ENCODE measurements at regions of chr19 and their contacts with region 1.

Region 1: DNA sequence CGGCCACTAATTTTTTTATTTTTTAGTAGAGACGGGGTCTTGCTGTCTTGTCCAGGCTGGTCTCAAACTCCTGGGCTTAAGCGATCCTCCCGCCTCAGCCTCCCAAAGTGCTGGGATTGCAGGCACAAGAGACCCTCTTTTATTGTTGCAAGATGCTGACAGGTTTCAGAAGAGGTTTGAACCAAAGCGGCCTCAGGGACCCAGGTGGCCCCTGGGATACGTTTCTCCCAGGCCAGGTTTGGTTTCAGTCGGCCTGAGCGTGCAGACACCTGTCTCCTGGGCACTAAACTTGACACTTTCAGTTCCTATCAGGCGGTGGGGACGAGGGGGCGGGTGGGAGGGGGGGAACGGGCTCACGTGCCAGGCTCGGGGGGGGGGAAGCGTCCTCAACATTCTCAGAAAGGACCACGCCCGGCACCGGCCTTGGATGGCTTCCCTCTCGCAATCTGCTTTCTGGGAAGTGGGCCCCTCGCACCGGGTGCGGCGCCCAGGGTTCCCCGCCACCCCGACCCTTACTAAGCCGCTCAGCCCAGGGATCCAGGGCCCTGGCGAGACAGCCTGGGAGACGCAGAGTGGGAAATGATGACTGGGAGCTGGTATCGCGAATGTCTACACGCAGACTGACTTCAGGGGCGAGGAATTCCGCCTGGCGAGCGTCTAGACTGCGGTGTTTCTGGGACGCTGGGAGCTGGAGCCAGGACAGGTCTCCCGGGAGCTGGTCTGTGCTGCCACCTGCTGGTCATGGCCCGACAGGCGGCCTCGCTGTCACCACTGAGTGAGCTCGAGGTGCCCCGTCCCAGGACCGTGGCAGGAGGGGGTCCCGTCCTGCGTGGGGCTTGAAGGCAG is 91.6 kb downstream of the GNG7 start:
- DNase-seq: peak; percentile 73 to 96 (median 89)
- ATAC-seq: peak; percentile 37
- H3K4me3 ChIP-seq: peak overlapping the region; percentile 37 to 42
- H3K4me3 Mint-ChIP-seq: peak overlapping the region; percentile 81
- H3K27ac ChIP-seq: no peak overlapping the region
- H3K27ac Mint-ChIP-seq: peak overlapping the region; percentile 57
- H3K4me1 ChIP-seq: peaks cover 30% of the 10 kb centered on the region
- H3K4me1 Mint-ChIP-seq: peaks cover 39% of the 10 kb centered on the region
- H3K27me3 ChIP-seq: peaks cover 0 to 2% of the 10 kb centered on the region in 2 experiments
- H3K27me3 Mint-ChIP-seq: no peaks in the 10 kb centered on the region
- CTCF ChIP-seq: peak; percentile 99

Region 2: DNA sequence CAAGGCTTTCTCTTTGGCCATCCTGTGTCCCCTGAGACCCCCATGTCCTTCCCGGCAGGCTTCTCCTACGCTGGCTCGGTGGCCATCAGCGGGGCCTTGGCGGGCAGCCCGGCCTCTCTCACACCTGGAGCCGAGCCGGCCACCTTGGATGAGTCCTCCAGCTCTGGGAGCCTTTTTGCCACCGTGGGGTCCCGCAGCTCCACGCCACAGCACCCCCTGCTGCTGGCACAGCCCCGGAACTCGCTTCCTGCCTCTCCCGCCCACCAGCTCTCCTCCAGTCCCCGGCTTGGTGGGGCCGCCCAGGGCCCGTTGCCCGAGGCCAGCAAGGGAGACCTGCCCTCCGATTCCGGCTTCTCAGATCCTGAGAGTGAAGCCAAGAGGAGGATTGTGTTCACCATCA is 388.9 kb before region 1 on chr19:
- CTCF ChIA-PET with region 1: no interaction called
- POLR2A ChIA-PET with region 1: no interaction called
- intact Hi-C with region 1: no loop called
- DNase-seq: no peak
- ATAC-seq: no peak
- H3K4me3 ChIP-seq: no peak overlapping the region
- H3K4me3 Mint-ChIP-seq: no peak overlapping the region
- H3K27ac ChIP-seq: no peak overlapping the region
- H3K27ac Mint-ChIP-seq: no peak overlapping the region
- H3K4me1 ChIP-seq: no peaks in the 10 kb centered on the region
- H3K4me1 Mint-ChIP-seq: peaks cover 6% of the 10 kb centered on the region
- H3K27me3 ChIP-seq: no peaks in the 10 kb centered on the region
- H3K27me3 Mint-ChIP-seq: no peaks in the 10 kb centered on the region
- CTCF ChIP-seq: no peak

Region 3: DNA sequence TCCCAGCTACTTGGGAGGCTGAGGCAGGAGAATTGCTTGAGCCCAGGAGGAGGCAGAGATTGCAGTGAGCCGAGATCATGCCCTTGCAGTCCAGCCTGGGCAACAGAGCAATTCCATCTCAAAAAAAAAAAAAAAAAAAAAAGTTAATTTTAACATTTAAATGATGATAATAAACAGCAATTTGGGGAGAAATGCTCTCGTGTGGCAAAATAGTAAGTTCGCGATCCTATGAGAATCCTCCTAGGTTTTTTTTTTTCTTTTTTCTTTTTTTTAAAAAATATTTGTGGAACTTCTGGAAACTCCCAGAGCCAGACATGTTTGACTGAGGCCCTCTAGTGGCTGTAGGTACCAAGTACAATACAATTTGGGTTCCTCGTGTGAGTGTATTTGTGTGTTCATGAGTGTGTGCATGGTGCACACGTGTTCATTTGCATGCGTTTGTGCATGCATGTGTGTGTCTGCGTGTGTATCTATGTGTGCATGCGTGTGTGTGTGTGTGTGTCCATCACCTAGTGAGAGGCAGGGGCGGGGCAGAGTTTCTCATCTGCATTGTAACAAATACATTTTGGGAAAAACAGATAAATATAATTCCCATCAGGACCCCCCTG is 219.6 kb before region 1 on chr19:
- CTCF ChIA-PET with region 1: interaction called, 5 read pairs
- POLR2A ChIA-PET with region 1: no interaction called
- intact Hi-C with region 1: loop called in 1 of 2 experiments (anchors 5 kb)
- DNase-seq: peak in 7 of 9 experiments; percentile 10 to 83 (median 42)
- ATAC-seq: peak; percentile 57
- H3K4me3 ChIP-seq: no peak overlapping the region
- H3K4me3 Mint-ChIP-seq: no peak overlapping the region
- H3K27ac ChIP-seq: no peak overlapping the region
- H3K27ac Mint-ChIP-seq: no peak overlapping the region
- H3K4me1 ChIP-seq: no peaks in the 10 kb centered on the region
- H3K4me1 Mint-ChIP-seq: peaks cover 12% of the 10 kb centered on the region
- H3K27me3 ChIP-seq: no peaks in the 10 kb centered on the region
- H3K27me3 Mint-ChIP-seq: peaks cover 2% of the 10 kb centered on the region
- CTCF ChIP-seq: peak; percentile 77

Region 4: GRCh38 chr19:2415281-2415972 is 195.4 kb before region 1 on chr19:
- CTCF ChIA-PET with region 1: no interaction called
- POLR2A ChIA-PET with region 1: no interaction called
- intact Hi-C with region 1: no loop called
- DNase-seq: no peak
- ATAC-seq: no peak
- H3K4me3 ChIP-seq: no peak overlapping the region
- H3K4me3 Mint-ChIP-seq: no peak overlapping the region
- H3K27ac ChIP-seq: no peak overlapping the region
- H3K27ac Mint-ChIP-seq: no peak overlapping the region
- H3K4me1 ChIP-seq: no peaks in the 10 kb centered on the region
- H3K4me1 Mint-ChIP-seq: no peaks in the 10 kb centered on the region
- H3K27me3 ChIP-seq: no peaks in the 10 kb centered on the region
- H3K27me3 Mint-ChIP-seq: no peaks in the 10 kb centered on the region
- CTCF ChIP-seq: no peak

Region 5: DNA sequence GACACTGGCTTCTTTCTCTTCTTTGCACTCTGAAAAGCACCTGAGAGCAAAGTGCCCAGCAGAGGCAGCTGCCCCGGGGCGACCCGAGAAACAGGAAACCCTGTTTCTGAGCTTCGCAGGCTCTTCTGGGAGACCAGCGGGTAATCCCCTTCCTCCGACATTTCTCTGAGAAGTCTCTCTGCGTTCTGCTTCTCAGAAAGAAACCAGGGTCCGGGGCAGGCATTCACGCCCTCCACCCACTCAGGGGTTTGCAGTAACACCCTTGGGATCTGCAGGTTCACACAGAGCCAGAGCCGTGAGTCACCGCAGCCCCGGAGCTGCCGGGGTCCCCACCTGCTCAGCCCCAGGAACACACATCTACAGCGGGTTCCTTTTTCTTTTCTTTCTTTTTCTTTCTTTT is 49.0 kb before region 1 on chr19:
- CTCF ChIA-PET with region 1: interaction called, 9 read pairs
- POLR2A ChIA-PET with region 1: interaction called, 4 read pairs
- intact Hi-C with region 1: loop called (anchors 2 to 5 kb)
- DNase-seq: peak; percentile 30 to 88 (median 72)
- ATAC-seq: peak; percentile 90
- H3K4me3 ChIP-seq: peak overlapping the region; percentile 65 to 89
- H3K4me3 Mint-ChIP-seq: peak overlapping the region; percentile 96
- H3K27ac ChIP-seq: peak overlapping the region; percentile 78 to 80
- H3K27ac Mint-ChIP-seq: peak overlapping the region; percentile 99
- H3K4me1 ChIP-seq: peaks cover 17% of the 10 kb centered on the region
- H3K4me1 Mint-ChIP-seq: peaks cover 14% of the 10 kb centered on the region
- H3K27me3 ChIP-seq: no peaks in the 10 kb centered on the region
- H3K27me3 Mint-ChIP-seq: no peaks in the 10 kb centered on the region
- CTCF ChIP-seq: no peak

Region 6: GRCh38 chr19:2578901-2579677 is 31.8 kb before region 1 on chr19:
- CTCF ChIA-PET with region 1: interaction called, 82 read pairs
- POLR2A ChIA-PET with region 1: interaction called, 3 read pairs
- intact Hi-C with region 1: loop called (anchors 1 kb)
- DNase-seq: peak; percentile 44 to 81 (median 69)
- ATAC-seq: peak; percentile 54
- H3K4me3 ChIP-seq: peak overlapping the region; percentile 4 to 49
- H3K4me3 Mint-ChIP-seq: peak overlapping the region; percentile 45
- H3K27ac ChIP-seq: no peak overlapping the region
- H3K27ac Mint-ChIP-seq: no peak overlapping the region
- H3K4me1 ChIP-seq: peaks cover 11% of the 10 kb centered on the region
- H3K4me1 Mint-ChIP-seq: peaks cover 2% of the 10 kb centered on the region
- H3K27me3 ChIP-seq: peaks cover 0 to 5% of the 10 kb centered on the region in 2 experiments
- H3K27me3 Mint-ChIP-seq: no peaks in the 10 kb centered on the region
- CTCF ChIP-seq: peak; percentile 44

Region 7: DNA sequence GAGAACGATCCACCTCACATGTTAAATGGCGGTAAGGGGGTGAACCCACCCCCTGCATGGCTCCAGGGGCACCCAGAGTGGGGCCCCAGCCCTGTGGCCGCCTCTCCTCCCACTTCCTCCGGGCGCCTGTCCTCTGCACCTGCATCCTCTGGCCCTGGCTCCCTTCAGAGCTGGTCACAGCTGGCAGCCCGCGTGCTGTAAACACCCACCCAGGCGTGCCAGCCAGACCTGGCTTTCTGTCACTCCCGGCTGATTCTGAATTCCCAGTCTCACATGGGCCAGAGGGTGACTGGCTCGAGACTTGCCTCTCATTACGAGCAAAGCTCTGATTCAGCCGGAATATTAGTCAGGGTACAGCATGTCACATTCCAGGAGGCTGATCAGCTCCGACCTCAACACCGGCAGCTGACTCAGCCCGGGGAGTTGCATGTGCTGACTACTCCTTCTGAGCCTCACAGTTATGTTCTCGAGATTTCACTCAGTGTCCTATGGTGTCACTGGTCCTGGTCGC is 16.5 kb after region 1 on chr19:
- CTCF ChIA-PET with region 1: interaction called, 36 read pairs
- POLR2A ChIA-PET with region 1: interaction called, 29 read pairs
- intact Hi-C with region 1: no loop called
- DNase-seq: peak in 2 of 9 experiments; percentile 28 to 45
- ATAC-seq: peak; percentile 35
- H3K4me3 ChIP-seq: no peak overlapping the region
- H3K4me3 Mint-ChIP-seq: no peak overlapping the region
- H3K27ac ChIP-seq: no peak overlapping the region
- H3K27ac Mint-ChIP-seq: peak overlapping the region; percentile 55
- H3K4me1 ChIP-seq: peaks cover 28% of the 10 kb centered on the region
- H3K4me1 Mint-ChIP-seq: peaks cover 46% of the 10 kb centered on the region
- H3K27me3 ChIP-seq: no peaks in the 10 kb centered on the region
- H3K27me3 Mint-ChIP-seq: no peaks in the 10 kb centered on the region
- CTCF ChIP-seq: no peak

Region 8: GRCh38 chr19:2722541-2723344 is 111.9 kb after region 1 on chr19:
- CTCF ChIA-PET with region 1: no interaction called
- POLR2A ChIA-PET with region 1: no interaction called
- intact Hi-C with region 1: no loop called
- DNase-seq: no peak
- ATAC-seq: no peak
- H3K4me3 ChIP-seq: no peak overlapping the region
- H3K4me3 Mint-ChIP-seq: no peak overlapping the region
- H3K27ac ChIP-seq: no peak overlapping the region
- H3K27ac Mint-ChIP-seq: no peak overlapping the region
- H3K4me1 ChIP-seq: peaks cover 12% of the 10 kb centered on the region
- H3K4me1 Mint-ChIP-seq: peaks cover 11% of the 10 kb centered on the region
- H3K27me3 ChIP-seq: peaks cover 20% of the 10 kb centered on the region in 2 experiments
- H3K27me3 Mint-ChIP-seq: peaks cover 29% of the 10 kb centered on the region
- CTCF ChIP-seq: no peak